ENCODE measurements at regions of chr1 and their contacts with region 1.

Region 1: GRCh38 chr1:36516372-36517325 is 33.9 kb upstream of the CSF3R start:
- DNase-seq: peak; percentile 43
- ATAC-seq: peak; percentile 85
- H3K4me3 ChIP-seq: no peak overlapping the region
- H3K27ac ChIP-seq: no peak overlapping the region
- H3K4me1 ChIP-seq: no peaks in the 10 kb centered on the region
- H3K27me3 ChIP-seq: no peaks in the 10 kb centered on the region; the same call in 1 of the 2 replicates
- CTCF ChIP-seq: peak; percentile 71
- POLR2A ChIP-seq: no peak
- RAD21 ChIP-seq: peak; percentile 75

Region 2: GRCh38 chr1:36096500-36097412 is 419.9 kb before region 1 on chr1:
- CTCF ChIA-PET with region 1: no interaction called
- POLR2A ChIA-PET with region 1: no interaction called
- dilution Hi-C with region 1: no loop called
- in situ Hi-C with region 1: no loop called
- intact Hi-C with region 1: no loop called
- DNase-seq: peak; percentile 5
- ATAC-seq: peak; percentile 31
- H3K4me3 ChIP-seq: no peak overlapping the region
- H3K27ac ChIP-seq: no peak overlapping the region
- H3K4me1 ChIP-seq: no peaks in the 10 kb centered on the region
- H3K27me3 ChIP-seq: no peaks in the 10 kb centered on the region
- CTCF ChIP-seq: peak; percentile 29; the same call in 1 of the 2 replicates
- POLR2A ChIP-seq: no peak
- RAD21 ChIP-seq: peak; percentile 28

Region 3: DNA sequence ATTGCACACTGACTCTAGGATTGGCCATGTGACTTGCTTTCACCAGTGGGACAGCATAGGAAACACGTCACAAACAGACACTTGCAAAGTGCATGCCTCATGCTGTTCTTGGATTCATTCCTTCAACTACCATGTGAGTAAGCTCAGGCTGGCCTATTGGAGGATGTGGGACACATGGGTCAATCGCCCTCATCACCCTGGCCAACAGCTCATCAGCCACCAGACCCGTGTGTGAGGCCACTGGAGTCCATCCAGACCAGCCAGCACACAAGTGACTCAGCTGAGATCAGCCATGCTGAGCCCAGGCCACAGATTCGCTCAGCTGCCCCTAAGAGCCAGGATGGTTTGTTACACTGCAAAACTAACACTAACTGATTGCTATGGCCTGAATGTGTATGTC is 733.7 kb after region 1 on chr1:
- CTCF ChIA-PET with region 1: no interaction called
- POLR2A ChIA-PET with region 1: no interaction called
- dilution Hi-C with region 1: no loop called
- in situ Hi-C with region 1: no loop called
- intact Hi-C with region 1: no loop called
- DNase-seq: peak; percentile 13
- ATAC-seq: no peak
- H3K4me3 ChIP-seq: no peak overlapping the region
- H3K27ac ChIP-seq: no peak overlapping the region
- H3K4me1 ChIP-seq: no peaks in the 10 kb centered on the region
- H3K27me3 ChIP-seq: no peaks in the 10 kb centered on the region
- CTCF ChIP-seq: no peak
- POLR2A ChIP-seq: no peak
- RAD21 ChIP-seq: no peak

Region 4: DNA sequence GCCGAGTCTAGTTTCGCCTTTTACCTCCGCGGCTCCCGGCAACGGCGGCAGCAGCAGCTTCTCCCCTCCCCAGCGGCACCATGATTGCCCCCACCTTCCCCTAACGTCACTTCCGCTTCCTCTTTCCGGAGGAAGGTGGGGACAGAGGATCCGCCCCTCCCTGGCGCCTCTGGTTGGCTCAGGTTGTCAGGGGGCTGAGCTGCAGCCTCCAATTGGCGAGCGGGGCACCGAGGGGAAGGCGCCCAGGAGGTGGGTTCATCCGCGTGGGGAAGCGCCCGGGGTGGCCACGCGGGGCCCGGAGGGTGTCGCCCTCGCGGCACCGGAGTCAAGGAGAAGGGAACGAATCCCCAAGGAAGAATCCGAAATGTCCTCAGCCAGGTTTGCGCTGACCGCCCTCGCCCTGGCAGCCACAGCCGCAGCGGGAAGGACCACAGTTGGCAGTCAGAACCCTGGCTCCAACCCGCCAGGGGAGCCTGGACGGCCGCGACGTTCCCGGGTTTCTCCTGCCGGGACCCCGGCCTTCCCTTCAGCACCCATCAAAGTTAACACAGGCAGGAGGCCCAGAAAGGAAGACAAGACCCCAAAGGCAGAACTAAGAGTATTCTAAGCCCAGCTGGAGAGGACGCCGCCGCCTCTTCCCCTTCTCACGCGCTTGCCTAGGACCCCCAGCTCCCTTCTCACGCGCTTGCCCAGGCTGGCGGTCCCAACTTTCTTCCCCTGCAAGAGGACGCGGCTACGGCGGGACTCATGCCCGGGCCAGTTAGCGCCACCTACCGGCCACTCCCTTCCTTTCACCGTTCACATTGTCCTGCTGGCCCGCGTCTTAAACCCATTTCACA is 1343.1 kb after region 1 on chr1 and contains the start of gene MTF1:
- CTCF ChIA-PET with region 1: no interaction called
- POLR2A ChIA-PET with region 1: no interaction called
- dilution Hi-C with region 1: no loop called
- in situ Hi-C with region 1: no loop called
- intact Hi-C with region 1: loop called (anchors 5 kb)
- DNase-seq: peak; percentile 95
- ATAC-seq: peak; percentile 99
- H3K4me3 ChIP-seq: peak within 1 kb of the TSS; percentile 94
- H3K27ac ChIP-seq: peak within 1 kb of the TSS; percentile 89
- H3K4me1 ChIP-seq: peaks cover 2% of the 10 kb centered on the region; the same call in 1 of the 2 replicates
- H3K27me3 ChIP-seq: no peaks in the 10 kb centered on the region
- CTCF ChIP-seq: peak; percentile 89
- POLR2A ChIP-seq: peak; percentile 70
- RAD21 ChIP-seq: peak; percentile 61
- total RNA-seq, gene MTF1: 2.2 and 2.3 TPM in 2 replicates